ENCODE measurements at regions of chr1 and their contacts with region 1.

Region 1: GRCh38 chr1:114346480-114347029 is 164.4 kb downstream of the TRIM33 start:
- DNase-seq: peak; percentile 94 to 98
- H3K4me3 ChIP-seq: peak overlapping the region; percentile 28 to 37
- H3K27ac ChIP-seq: peak overlapping the region; percentile 90 to 97
- H3K4me1 ChIP-seq: no peaks in the 10 kb centered on the region
- H3K27me3 ChIP-seq: no peaks in the 10 kb centered on the region
- CTCF ChIP-seq: peak; percentile 100
- POLR2A ChIP-seq: peak; percentile 16 to 48

Region 2: GRCh38 chr1:114581335-114582287 is 235.1 kb after region 1 on chr1 and contains the start of gene BCAS2:
- intact Hi-C with region 1: loop called (anchors 10 kb)
- DNase-seq: peak; percentile 97 to 99
- H3K4me3 ChIP-seq: peak within 1 kb of the TSS; percentile 65 to 87
- H3K27ac ChIP-seq: peak within 1 kb of the TSS; percentile 92 to 99
- H3K4me1 ChIP-seq: peaks cover 0 to 15% of the 10 kb centered on the region in 2 donors
- H3K27me3 ChIP-seq: no peaks in the 10 kb centered on the region
- CTCF ChIP-seq: peak in 1 of 4 experiments; percentile 13
- POLR2A ChIP-seq: peak; percentile 85 to 96
- total RNA-seq, gene BCAS2: 31.8 to 61.2 (median 40.2) TPM

Measured in uterus (tissue), 4 donors.